Upper lobe of right lung (tissue), 1 donor: ENCODE measurements at regions of chr7 and their contacts with region 1.

Region 1: GRCh38 chr7:150448789-150449147 is 1.7 kb upstream of the GIMAP8 start:
- DNase-seq: peak; percentile 86
- ATAC-seq: peak; percentile 78
- H3K4me3 ChIP-seq: no peak overlapping the region
- H3K27ac ChIP-seq: peak overlapping the region; percentile 87
- H3K4me1 ChIP-seq: peaks cover 12% of the 10 kb centered on the region
- H3K27me3 ChIP-seq: no peaks in the 10 kb centered on the region
- CTCF ChIP-seq: peak; percentile 89

Region 2: GRCh38 chr7:149489391-149490024 is 959.3 kb before region 1 on chr7:
- intact Hi-C with region 1: no loop called
- DNase-seq: no peak
- ATAC-seq: peak; percentile 55
- H3K4me3 ChIP-seq: no peak overlapping the region
- H3K27ac ChIP-seq: no peak overlapping the region
- H3K4me1 ChIP-seq: peaks cover under 1% of the 10 kb centered on the region
- H3K27me3 ChIP-seq: no peaks in the 10 kb centered on the region
- CTCF ChIP-seq: peak; percentile 8

Region 3: GRCh38 chr7:149861446-149862045 is 587.2 kb before region 1 on chr7:
- intact Hi-C with region 1: no loop called
- DNase-seq: peak; percentile 61
- ATAC-seq: peak; percentile 18
- H3K4me3 ChIP-seq: no peak overlapping the region
- H3K27ac ChIP-seq: no peak overlapping the region
- H3K4me1 ChIP-seq: peaks cover 3% of the 10 kb centered on the region
- H3K27me3 ChIP-seq: no peaks in the 10 kb centered on the region
- CTCF ChIP-seq: peak; percentile 36

Region 4: GRCh38 chr7:150753826-150754603 is 305.2 kb after region 1 on chr7:
- intact Hi-C with region 1: loop called (anchors 10 kb)
- DNase-seq: no peak
- ATAC-seq: peak; percentile 52
- H3K4me3 ChIP-seq: no peak overlapping the region
- H3K27ac ChIP-seq: no peak overlapping the region
- H3K4me1 ChIP-seq: peaks cover 11% of the 10 kb centered on the region
- H3K27me3 ChIP-seq: no peaks in the 10 kb centered on the region
- CTCF ChIP-seq: peak; percentile 30